ENCODE measurements at regions of chr1 and their contacts with region 1.

Region 1: DNA sequence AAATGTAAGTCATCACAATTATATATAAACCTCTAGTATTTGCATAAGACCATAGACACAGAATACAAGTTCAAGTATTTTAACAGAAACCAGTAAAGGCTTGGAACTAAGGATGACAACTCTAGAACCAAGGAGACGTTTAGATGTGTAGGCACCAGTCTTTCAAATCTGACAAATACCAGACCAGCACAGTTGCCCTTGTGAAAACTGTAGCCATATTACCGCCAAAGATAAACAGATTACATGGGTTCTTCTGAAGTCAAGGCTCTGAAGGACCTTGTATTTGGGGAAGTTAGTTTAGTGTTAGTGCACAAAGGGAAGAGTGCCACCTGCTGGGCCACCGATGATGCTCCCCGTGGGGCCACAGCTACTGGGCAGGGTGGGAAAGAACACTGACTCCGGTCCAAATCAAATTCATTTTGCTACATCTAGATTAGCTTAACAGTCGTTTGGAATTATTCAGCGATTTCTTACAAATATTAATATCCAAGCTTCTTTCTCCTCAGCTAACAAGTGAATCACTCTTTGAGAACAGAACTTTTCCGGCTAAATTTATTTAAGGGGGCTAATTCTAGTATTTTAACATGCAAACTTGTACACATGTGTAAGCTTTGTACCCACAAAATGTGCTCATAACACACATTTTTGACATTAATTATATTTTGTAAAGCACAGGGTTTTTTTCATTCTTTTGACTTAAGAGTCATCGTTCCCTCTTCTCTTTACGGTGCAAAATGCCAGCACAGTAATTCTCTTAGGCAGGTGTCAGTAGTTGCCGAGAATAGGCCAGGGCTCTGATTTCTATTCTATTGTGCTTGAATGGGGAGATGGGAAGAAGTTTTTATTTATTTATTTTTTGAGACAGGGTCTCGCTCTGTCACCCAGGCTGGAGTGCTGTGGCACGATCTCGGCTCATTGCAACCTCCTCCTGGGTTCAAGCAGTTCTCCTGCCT is 8.0 kb upstream of the NIBAN1 start:
- DNase-seq: peak; percentile 80
- ATAC-seq: peak; percentile 100
- H3K4me3 ChIP-seq: no peak overlapping the region
- H3K27ac ChIP-seq: no peak overlapping the region
- H3K4me1 ChIP-seq: no peaks in the 10 kb centered on the region
- H3K27me3 ChIP-seq: no peaks in the 10 kb centered on the region
- CTCF ChIP-seq: peak; percentile 94
- POLR2A ChIP-seq: no peak
- RAD21 ChIP-seq: peak; percentile 94

Region 2: DNA sequence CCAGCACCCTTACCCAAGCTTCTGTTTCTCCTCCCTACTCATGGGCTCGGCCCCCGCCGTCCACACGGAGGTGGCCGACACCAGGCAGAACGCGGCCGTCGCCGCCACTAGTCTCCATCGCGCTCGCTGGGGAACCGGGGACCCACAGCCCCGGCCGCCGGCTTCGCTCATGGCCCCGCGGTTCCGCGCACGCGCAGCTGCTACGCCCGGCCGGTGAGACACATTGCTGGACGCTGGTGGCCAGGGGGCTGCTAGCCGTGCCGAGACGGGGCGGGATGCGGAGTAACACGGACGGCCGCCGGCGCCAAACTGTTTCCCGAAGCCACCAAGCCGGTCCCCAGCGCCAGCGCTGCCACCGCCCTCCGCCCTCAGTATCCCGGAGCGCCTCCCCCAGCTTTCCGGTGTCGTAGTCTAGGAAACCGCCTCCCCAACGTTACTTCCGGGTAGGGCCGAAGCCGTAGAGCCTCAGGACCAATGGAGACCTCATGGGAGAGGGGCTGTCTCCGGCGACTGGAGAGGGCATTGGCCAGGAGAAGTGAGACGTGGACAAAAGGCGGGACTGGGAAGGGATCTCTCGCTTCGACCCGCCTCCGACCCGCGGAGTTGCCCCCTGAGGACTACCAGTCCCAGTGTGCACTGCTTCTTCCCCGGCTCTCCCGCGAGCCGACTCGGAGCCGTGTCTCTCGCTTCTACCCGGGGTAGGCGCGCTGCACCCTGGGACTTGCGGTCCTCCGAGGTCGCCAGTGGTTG is 227.6 kb before region 1 on chr1 and contains the start of gene EDEM3:
- CTCF ChIA-PET with region 1: no interaction called
- POLR2A ChIA-PET with region 1: no interaction called
- dilution Hi-C with region 1: no loop called
- in situ Hi-C with region 1: no loop called
- intact Hi-C with region 1: loop called (anchors 5 kb)
- DNase-seq: peak; percentile 99
- ATAC-seq: peak; percentile 98
- H3K4me3 ChIP-seq: peak within 1 kb of the TSS; percentile 74
- H3K27ac ChIP-seq: peak within 1 kb of the TSS; percentile 86
- H3K4me1 ChIP-seq: no peaks in the 10 kb centered on the region
- H3K27me3 ChIP-seq: no peaks in the 10 kb centered on the region
- CTCF ChIP-seq: no peak
- POLR2A ChIP-seq: peak; percentile 85
- RAD21 ChIP-seq: no peak
- total RNA-seq, gene EDEM3: 29.9 and 50.5 TPM in 2 replicates

Region 3: DNA sequence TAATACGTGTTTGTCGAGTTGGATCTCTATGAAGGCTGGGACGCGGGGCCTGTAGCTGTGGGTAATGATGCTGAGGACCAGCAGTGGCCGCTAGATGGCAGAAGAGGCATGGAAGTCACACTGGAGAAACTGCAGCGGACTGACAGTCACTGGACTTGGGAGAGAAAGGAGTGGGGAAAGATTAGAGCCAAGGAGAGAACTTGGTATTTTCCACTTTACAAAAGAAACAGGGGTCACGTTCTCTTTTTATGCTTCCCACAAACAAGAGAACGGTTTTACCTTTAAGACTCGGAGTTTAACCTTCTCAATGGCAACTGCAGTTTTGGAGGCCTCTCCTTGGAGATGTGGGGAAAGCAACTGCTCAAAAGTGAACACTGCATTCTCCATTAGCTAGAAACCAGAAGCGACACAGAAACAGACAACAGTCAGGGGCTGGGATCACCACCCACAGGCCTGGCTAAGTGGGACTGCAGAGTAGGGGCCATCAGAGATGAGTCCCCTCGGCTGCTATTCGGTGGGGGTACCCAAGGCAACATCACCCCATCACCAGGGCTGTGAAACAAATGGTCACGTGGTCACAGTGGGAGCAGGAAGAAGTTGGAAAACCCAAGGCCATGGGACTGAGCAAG is 176.5 kb before region 1 on chr1:
- CTCF ChIA-PET with region 1: interaction called, 21 read pairs
- POLR2A ChIA-PET with region 1: no interaction called
- dilution Hi-C with region 1: loop called (anchors 25 kb)
- in situ Hi-C with region 1: loop called (anchors 5 kb)
- intact Hi-C with region 1: loop called (anchors 1 kb)
- DNase-seq: peak; percentile 83
- ATAC-seq: peak; percentile 89
- H3K4me3 ChIP-seq: no peak overlapping the region
- H3K27ac ChIP-seq: no peak overlapping the region
- H3K4me1 ChIP-seq: peaks cover 7% of the 10 kb centered on the region
- H3K27me3 ChIP-seq: no peaks in the 10 kb centered on the region
- CTCF ChIP-seq: peak; percentile 96
- POLR2A ChIP-seq: 0 out of 2 replicates have a peak, but pooled peaks have one; percentile 50
- RAD21 ChIP-seq: peak; percentile 99

Region 4: GRCh38 chr1:185096531-185096930 is 114.3 kb after region 1 on chr1:
- CTCF ChIA-PET with region 1: no interaction called
- POLR2A ChIA-PET with region 1: no interaction called
- dilution Hi-C with region 1: no loop called
- in situ Hi-C with region 1: no loop called
- intact Hi-C with region 1: no loop called
- DNase-seq: peak; percentile 56
- ATAC-seq: no peak
- H3K4me3 ChIP-seq: no peak overlapping the region
- H3K27ac ChIP-seq: no peak overlapping the region
- H3K4me1 ChIP-seq: no peaks in the 10 kb centered on the region
- H3K27me3 ChIP-seq: no peaks in the 10 kb centered on the region
- CTCF ChIP-seq: no peak
- POLR2A ChIP-seq: no peak
- RAD21 ChIP-seq: no peak

Region 5: DNA sequence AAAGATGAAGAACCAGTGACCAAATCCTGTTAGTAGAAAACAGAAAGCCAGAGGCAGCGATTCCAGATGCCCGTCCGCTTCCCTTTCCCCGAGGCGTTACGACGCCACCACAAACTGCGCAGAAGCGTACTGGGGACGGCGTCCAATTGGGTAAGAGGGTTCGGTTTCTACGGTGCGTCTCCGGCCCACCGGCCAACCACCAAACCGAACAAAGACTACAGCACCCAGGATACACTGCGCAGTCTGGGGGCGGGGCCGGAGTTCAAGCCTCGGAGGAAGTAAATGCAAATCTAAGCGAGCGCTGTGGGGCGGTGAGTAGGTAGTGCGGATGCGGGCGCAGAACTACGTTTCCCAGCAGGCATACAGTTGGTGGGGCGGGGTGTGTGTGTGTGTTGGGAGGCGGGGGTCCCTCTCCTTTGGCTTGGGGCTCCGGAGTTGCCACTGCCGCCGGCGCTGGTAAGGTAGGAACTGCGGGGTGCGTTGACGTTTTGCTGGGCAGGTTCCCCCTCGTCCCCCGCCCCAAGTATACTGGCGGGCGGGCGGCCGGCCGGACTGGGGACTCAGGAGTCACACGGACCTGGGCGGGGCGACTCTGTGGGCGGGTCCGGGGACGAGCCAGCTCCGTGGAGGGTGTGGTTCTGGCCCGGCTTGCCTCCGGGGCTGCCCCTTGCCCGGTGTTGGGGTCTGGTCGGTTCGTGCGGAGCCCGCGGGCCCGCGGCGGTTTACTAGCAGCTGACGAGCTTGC is 174.7 kb after region 1 on chr1 and contains the starts of genes SWT1 and TRMT1L:
- CTCF ChIA-PET with region 1: no interaction called
- POLR2A ChIA-PET with region 1: no interaction called
- dilution Hi-C with region 1: no loop called
- in situ Hi-C with region 1: loop called (anchors 25 kb)
- intact Hi-C with region 1: no loop called
- DNase-seq: peak; percentile 99
- ATAC-seq: peak; percentile 96
- H3K4me3 ChIP-seq: peak within 1 kb of the TSS; percentile 70
- H3K27ac ChIP-seq: peak within 1 kb of the TSS; percentile 90
- H3K4me1 ChIP-seq: peaks cover 2% of the 10 kb centered on the region; the same call in 1 of the 2 replicates
- H3K27me3 ChIP-seq: no peaks in the 10 kb centered on the region
- CTCF ChIP-seq: no peak
- POLR2A ChIP-seq: peak; percentile 93
- RAD21 ChIP-seq: no peak
- total RNA-seq, gene SWT1: 2.7 and 4.2 TPM in 2 replicates
- total RNA-seq, gene TRMT1L: 21.9 and 25.3 TPM in 2 replicates

Region 6: GRCh38 chr1:185170291-185170848 is 188.1 kb after region 1 on chr1:
- CTCF ChIA-PET with region 1: interaction called, 11 read pairs
- POLR2A ChIA-PET with region 1: no interaction called
- dilution Hi-C with region 1: no loop called
- in situ Hi-C with region 1: loop called (anchors 25 kb)
- intact Hi-C with region 1: loop called (anchors 1 kb)
- DNase-seq: peak; percentile 67
- ATAC-seq: peak; percentile 90
- H3K4me3 ChIP-seq: no peak overlapping the region
- H3K27ac ChIP-seq: no peak overlapping the region
- H3K4me1 ChIP-seq: no peaks in the 10 kb centered on the region; the same call in 1 of the 2 replicates
- H3K27me3 ChIP-seq: no peaks in the 10 kb centered on the region
- CTCF ChIP-seq: peak; percentile 56
- POLR2A ChIP-seq: no peak
- RAD21 ChIP-seq: peak; percentile 68

Region 7: GRCh38 chr1:185257947-185258203 is 275.6 kb after region 1 on chr1:
- CTCF ChIA-PET with region 1: no interaction called
- POLR2A ChIA-PET with region 1: no interaction called
- dilution Hi-C with region 1: no loop called
- in situ Hi-C with region 1: no loop called
- intact Hi-C with region 1: no loop called
- DNase-seq: peak; percentile 17
- ATAC-seq: no peak
- H3K4me3 ChIP-seq: no peak overlapping the region
- H3K27ac ChIP-seq: no peak overlapping the region
- H3K4me1 ChIP-seq: peaks cover 5% of the 10 kb centered on the region; the same call in 1 of the 2 replicates
- H3K27me3 ChIP-seq: no peaks in the 10 kb centered on the region
- CTCF ChIP-seq: no peak
- POLR2A ChIP-seq: no peak
- RAD21 ChIP-seq: no peak

Region 8: DNA sequence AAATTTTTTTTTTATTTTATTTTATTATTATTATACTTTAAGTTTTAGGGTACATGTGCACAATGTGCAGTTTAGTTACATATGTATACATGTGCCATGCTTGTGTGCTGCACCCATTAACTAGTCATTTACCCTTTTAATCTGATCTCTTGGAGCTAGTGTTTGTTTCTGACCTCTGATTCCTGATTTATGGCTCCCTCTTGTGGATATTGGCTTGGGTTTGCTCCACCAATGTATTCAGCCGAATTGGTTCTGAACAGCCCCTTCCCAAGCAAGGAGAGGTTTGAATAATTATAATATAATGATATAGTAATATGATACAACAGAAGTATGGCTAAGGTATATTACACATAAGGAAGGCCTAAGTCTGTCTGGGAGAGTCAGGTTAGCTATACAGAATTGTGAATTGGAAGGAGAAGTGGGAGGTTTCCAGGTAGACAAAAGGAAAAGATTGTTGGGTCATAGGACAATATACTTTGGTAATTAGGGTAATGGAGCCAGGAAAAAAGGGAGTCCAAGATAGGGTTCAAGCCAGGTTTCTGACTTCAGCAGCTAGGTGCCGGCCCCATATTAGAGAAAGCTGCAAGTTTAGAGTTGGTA is 698.9 kb after region 1 on chr1:
- CTCF ChIA-PET with region 1: interaction called, 3 read pairs
- POLR2A ChIA-PET with region 1: no interaction called
- dilution Hi-C with region 1: no loop called
- in situ Hi-C with region 1: no loop called
- intact Hi-C with region 1: loop called (anchors 5 kb)
- DNase-seq: peak; percentile 44
- ATAC-seq: peak; percentile 71
- H3K4me3 ChIP-seq: no peak overlapping the region
- H3K27ac ChIP-seq: no peak overlapping the region
- H3K4me1 ChIP-seq: no peaks in the 10 kb centered on the region
- H3K27me3 ChIP-seq: no peaks in the 10 kb centered on the region
- CTCF ChIP-seq: peak; percentile 67
- POLR2A ChIP-seq: no peak
- RAD21 ChIP-seq: peak; percentile 67

Measured in IMR-90 (cell line).